Lower leg skin (tissue), 4 donors: ENCODE measurements at regions of chr20 and their contacts with region 1.

Region 1: GRCh38 chr20:50189681-50190582 is 698 bp upstream of the CEBPB start:
- DNase-seq: peak; percentile 88 to 97
- H3K4me3 ChIP-seq: peak overlapping the region; percentile 89
- CTCF ChIP-seq: peak in 1 of 3 donors; percentile 28
- POLR2A ChIP-seq: no peak

Region 2: DNA sequence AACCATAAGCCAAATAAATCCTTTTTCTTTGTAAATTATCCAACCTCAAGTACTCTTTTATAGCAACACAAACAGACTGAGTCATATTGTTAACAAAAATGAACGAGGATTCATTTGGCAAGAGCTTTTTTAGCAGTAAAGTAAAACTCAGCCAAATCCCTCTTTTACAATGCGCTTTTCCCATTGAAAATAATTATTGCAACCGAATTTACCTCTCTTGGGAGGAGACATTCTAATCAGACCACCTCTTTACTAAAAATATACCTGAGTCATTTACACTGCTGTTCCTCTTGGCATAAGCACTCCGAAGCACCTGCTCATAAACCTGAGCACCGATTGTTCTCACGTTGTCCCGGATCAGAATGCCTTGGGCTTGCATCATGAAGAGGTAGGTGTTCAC is 533.6 kb before region 1 on chr20:
- intact Hi-C with region 1: no loop called
- DNase-seq: no peak
- H3K4me3 ChIP-seq: no peak overlapping the region
- CTCF ChIP-seq: no peak
- POLR2A ChIP-seq: no peak

Region 3: GRCh38 chr20:49786671-49787375 is 403.1 kb before region 1 on chr20:
- intact Hi-C with region 1: no loop called
- DNase-seq: no peak
- H3K4me3 ChIP-seq: no peak overlapping the region
- CTCF ChIP-seq: no peak
- POLR2A ChIP-seq: no peak

Region 4: DNA sequence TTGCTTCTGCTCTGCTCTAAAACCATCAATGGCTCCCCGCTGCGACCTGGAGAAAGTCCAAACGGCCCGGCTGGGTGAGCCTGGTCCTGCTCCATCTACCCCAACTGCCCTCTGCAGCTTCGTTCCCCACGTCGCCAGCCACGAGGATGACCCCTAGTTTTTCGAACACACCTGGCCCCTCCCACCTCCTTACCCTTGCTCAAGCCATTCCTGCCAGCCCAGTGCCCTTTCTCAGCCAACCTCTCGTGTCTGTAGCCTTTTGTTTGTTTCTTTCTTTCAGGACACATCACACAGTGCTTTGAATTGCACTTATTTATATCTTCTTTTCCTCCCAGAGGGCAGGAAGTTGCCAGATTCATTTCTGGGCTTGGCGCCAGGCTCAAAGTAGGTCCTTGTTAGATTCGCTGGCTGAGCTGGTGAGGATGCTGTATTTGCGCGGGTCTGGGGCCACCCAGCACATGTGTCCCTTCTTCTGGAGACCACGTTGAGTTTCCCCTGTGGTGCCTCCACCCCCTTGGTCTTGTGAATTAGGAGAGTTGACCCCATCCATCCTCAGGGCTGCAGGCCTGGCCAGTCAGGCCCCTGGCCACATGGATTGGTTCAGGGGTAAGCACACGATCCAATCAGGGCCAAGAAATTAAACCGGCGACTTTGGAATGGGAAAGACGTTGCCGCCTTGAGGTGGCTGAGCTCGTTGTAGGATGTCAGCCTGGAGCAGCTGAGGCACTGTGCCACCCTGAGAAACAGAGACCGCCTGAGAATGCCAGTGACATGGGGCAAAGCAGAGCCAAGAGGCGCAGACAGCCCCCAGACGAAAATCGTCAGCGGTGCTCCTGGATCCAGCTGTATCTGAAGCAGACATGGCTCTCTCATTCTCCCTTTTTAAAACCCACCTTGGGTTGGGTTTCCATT is 156.7 kb after region 1 on chr20:
- intact Hi-C with region 1: loop called (anchors 10 kb)
- DNase-seq: peak; percentile 89 to 97
- H3K4me3 ChIP-seq: no peak overlapping the region
- CTCF ChIP-seq: no peak
- POLR2A ChIP-seq: no peak

Region 5: DNA sequence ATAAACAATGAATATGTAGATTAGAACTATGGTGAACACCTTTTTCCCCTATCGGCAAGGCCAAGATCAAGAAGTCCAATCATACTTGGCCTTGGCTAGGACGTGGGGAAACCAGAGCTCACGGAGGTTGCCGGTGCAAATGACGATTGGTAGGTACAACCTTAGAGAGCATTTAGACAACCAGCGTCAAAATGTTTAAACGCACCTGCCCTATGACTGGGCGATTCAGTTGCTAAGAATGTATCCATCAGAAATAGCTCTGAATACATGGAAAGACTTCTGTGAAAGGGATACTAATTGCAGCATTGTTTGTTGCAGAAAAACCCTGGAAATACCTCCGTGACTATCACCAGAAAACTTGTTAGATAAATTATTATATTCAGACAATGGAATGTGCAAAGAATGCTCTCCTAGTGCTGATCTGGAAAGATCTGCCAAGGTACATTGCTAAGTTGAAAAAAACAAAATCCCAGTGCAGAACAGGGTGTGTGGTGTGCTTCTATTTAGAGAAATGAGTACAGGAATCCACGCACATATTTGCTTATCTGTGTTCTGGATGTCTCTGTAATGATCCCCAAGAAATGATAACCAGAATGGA is 272.3 kb after region 1 on chr20:
- intact Hi-C with region 1: loop called (anchors 2 kb)
- DNase-seq: no peak
- H3K4me3 ChIP-seq: no peak overlapping the region
- CTCF ChIP-seq: no peak
- POLR2A ChIP-seq: no peak

Region 6: GRCh38 chr20:50588034-50588611 is 398.2 kb after region 1 on chr20:
- intact Hi-C with region 1: loop called (anchors 5 kb)
- DNase-seq: peak in 1 of 2 donors; percentile 56
- H3K4me3 ChIP-seq: no peak overlapping the region
- CTCF ChIP-seq: peak in 1 of 3 donors; percentile 83
- POLR2A ChIP-seq: no peak